Activated naive CD8-positive, alpha-beta T cell treated with anti-CD3 and anti-CD28 coated beads, Interleukin-2, amount 10 ng/mL, durations not matched to agents 7 days and 5 days (primary cell): ENCODE measurements at regions of chr4 and their contacts with region 1.

Region 1: GRCh38 chr4:164956766-164957643 is 20.5 kb downstream of the TRIM61 start:
- DNase-seq: peak; percentile 82
- ATAC-seq: peak; percentile 100
- H3K4me3 Mint-ChIP-seq: peak overlapping the region; percentile 93
- H3K27ac Mint-ChIP-seq: peak overlapping the region; percentile 82
- H3K4me1 Mint-ChIP-seq: peaks cover 14% of the 10 kb centered on the region
- H3K27me3 Mint-ChIP-seq: no peaks in the 10 kb centered on the region

Region 2: GRCh38 chr4:164977243-164978164 is 20.5 kb after region 1 on chr4 and contains the start of gene TRIM61:
- POLR2A ChIA-PET with region 1: interaction called, 12 read pairs
- DNase-seq: peak; percentile 81
- ATAC-seq: peak; percentile 100
- H3K4me3 Mint-ChIP-seq: peak within 1 kb of the TSS; percentile 76
- H3K27ac Mint-ChIP-seq: peak within 1 kb of the TSS; percentile 62
- H3K4me1 Mint-ChIP-seq: peaks cover 13% of the 10 kb centered on the region
- H3K27me3 Mint-ChIP-seq: no peaks in the 10 kb centered on the region
- total RNA-seq, gene TRIM61: 2.9 to 3.1 TPM